GM12878 (cell line): ENCODE measurements at regions of chr14 and their contacts with region 1.

Region 1: DNA sequence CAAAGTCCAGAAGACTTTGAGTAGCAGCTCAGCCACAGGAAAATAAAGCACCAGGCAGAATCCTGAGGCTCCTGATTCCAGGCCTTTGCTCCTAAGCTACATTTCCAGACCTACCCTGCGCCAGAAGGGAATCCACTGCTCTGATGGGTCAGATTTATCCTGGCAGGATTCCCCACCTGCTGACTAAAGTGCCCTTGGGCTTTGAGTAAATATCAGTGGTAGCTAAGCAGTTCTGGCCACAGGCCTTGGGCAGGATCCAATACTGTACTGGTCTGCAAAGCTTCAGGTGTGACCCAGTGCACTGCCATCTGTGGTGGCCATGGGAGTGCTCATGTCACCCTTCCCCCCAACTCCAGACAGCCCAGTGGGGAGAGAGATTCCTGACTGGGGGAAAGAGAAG is 10.4 kb upstream of the ACOT1 start:
- DNase-seq: no peak
- ATAC-seq: no peak
- H3K4me3 ChIP-seq: no peak overlapping the region
- H3K27ac ChIP-seq: no peak overlapping the region
- H3K4me1 ChIP-seq: no peaks in the 10 kb centered on the region
- H3K27me3 ChIP-seq: 0 out of 4 replicates have a peak, but pooled peaks cover 0 to 2% of the 10 kb centered on the region in 2 experiments
- CTCF ChIP-seq: no peak
- EP300 ChIP-seq: no peak
- POLR2A ChIP-seq: no peak
- RAD21 ChIP-seq: no peak

Region 2: DNA sequence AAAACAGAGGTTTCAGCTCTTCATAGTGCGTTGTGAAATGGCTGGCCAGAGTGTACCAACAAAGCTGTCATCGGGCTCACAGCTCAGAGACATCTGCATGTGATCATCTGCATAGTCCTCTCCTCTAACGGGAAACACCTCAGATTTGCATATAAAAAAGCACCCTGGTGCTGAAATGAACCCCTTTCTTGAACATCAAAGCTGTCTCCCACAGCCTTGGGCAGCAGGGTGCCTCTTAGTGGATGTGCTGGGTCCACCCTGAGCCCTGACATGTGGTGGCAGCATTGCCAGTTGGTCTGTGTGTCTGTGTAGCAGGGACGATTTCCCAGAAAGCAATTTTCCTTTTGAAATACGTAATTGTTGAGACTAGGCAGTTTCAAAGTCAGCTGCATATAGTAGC is 303.5 kb before region 1 on chr14:
- CTCF ChIA-PET with region 1: no interaction called
- POLR2A ChIA-PET with region 1: no interaction called
- RAD21 ChIA-PET with region 1: no interaction called
- SMC1A ChIA-PET with region 1: no interaction called
- in situ Hi-C with region 1: no loop called
- intact Hi-C with region 1: no loop called
- DNase-seq: peak; percentile 63
- ATAC-seq: peak; percentile 96
- H3K4me3 ChIP-seq: no peak overlapping the region
- H3K27ac ChIP-seq: peak overlapping the region; percentile 20; the same call in 1 of the 2 replicates
- H3K4me1 ChIP-seq: peaks cover 9% of the 10 kb centered on the region; the same call in 1 of the 2 replicates
- H3K27me3 ChIP-seq: no peaks in the 10 kb centered on the region
- CTCF ChIP-seq: peak in 1 of 3 experiments; percentile 50; a peak in 2 of 6 replicates
- EP300 ChIP-seq: no peak
- POLR2A ChIP-seq: peak; percentile 49; the same call in 1 of the 2 replicates
- RAD21 ChIP-seq: peak; percentile 32; the same call in 1 of the 2 replicates

Region 3: GRCh38 chr14:73568381-73568781 is 41.8 kb after region 1 on chr14:
- CTCF ChIA-PET with region 1: interaction called, 8 read pairs
- POLR2A ChIA-PET with region 1: interaction called, 5 read pairs
- RAD21 ChIA-PET with region 1: interaction called, 4 read pairs
- SMC1A ChIA-PET with region 1: interaction called, 4 read pairs
- in situ Hi-C with region 1: loop called (anchors 5 kb)
- intact Hi-C with region 1: loop called (anchors 5 kb)
- DNase-seq: no peak
- ATAC-seq: no peak
- H3K4me3 ChIP-seq: peak overlapping the region; percentile 60
- H3K27ac ChIP-seq: peak overlapping the region; percentile 68
- H3K4me1 ChIP-seq: peaks cover 7% of the 10 kb centered on the region
- H3K27me3 ChIP-seq: no peaks in the 10 kb centered on the region
- CTCF ChIP-seq: no peak
- EP300 ChIP-seq: no peak
- POLR2A ChIP-seq: no peak
- RAD21 ChIP-seq: no peak